KBM-7 (cell line): ENCODE measurements at regions of chr5 and their contacts with region 1.

Region 1: DNA sequence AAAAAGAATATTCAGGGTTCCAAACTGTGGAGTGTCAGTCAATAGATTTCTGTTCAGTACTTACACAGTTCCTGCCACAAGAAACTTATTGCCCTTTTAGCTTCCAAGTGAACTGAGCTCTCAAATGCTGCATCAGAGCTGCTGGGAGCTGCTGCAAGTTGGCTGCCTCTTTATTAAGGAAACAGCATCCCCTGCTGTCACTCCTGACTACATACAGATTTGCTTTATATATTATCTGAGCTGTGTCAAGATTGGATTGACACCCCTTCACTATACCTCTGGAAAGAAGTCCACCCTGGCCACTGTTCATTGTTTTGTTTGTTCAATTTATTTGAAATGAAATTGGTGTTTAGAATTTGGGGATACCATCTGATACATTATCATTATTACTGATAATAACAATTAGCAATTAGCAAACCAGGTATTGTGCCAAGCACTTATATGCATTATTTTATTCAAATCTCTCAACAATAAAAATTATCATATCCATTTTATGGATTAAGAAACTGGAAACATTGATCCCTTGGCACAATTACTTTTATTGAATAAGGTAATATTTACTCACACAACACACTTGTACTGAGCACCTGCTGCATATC is 16.4 kb upstream of the C5orf58 start:
- DNase-seq: peak; percentile 58

Region 2: DNA sequence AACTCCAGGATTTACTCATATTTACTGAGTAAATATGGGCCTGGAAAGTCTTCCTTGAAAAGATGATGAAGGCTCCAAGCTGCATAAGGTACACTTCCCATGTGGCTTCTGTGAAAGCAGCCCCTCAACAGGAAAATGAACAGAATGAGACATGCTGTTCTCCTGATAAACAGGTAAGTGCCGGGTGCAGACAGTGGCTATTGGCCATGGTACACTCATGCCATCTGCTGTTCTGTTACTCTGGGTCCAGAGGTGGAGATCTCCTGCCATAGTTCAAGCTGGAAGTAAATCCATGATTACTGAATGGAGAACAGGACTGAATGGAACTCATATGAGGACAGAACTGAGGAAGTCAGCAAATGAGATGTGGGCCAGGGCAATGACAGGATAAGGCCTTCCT is 1019.0 kb before region 1 on chr5:
- in situ Hi-C with region 1: no loop called
- DNase-seq: no peak

Region 3: DNA sequence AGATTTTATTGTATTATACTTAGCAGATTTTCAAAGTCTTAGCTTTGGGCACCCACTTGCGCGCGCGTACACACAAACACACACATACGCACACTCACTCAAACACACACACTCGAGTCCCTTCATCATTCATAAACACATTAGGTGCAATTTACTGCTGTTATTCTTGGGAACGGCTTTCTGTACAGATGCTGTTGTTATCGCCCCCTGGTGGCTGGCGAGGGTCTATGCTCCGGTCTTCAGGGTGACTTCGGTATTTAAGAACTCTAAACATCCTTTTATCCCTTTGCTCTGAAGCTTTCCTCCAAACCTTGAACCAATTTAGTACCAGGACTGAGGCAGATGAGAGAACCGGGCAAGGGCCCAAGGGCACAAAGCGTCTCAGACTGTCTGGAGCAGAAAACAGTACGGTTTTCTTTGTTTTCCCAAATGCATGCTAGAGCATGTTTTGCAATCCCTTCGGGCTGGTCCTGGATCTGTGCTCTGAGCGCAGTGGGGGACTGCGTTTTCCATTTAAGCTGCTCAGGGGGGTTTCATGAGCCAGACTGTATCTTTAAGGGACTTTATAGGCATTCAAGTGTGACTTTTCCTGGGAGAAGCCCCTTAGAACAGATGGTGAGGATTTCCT is 913.8 kb before region 1 on chr5:
- in situ Hi-C with region 1: no loop called
- DNase-seq: peak; percentile 60

Region 4: DNA sequence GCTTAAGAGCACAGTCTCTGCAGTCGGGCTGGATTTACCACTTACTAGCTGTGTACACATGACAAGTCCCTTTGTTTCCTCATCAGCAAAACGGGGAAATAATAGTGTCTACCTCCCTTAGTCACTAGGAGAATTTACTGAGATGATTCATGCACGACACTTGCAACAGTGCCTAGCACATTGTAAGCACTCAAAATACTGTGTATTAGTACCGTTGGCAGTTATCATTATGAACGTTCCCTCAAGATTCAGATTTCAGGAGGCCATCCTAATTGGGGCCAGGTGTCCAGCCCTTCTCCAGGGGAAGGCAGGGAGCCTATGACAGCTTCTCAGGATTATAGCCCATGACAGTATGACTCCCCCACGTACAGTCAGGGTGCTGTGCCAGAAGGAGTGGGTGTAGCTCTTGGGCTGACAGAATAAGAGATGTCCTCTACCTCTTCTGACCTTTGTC is 415.0 kb before region 1 on chr5:
- in situ Hi-C with region 1: no loop called
- DNase-seq: no peak

Region 5: DNA sequence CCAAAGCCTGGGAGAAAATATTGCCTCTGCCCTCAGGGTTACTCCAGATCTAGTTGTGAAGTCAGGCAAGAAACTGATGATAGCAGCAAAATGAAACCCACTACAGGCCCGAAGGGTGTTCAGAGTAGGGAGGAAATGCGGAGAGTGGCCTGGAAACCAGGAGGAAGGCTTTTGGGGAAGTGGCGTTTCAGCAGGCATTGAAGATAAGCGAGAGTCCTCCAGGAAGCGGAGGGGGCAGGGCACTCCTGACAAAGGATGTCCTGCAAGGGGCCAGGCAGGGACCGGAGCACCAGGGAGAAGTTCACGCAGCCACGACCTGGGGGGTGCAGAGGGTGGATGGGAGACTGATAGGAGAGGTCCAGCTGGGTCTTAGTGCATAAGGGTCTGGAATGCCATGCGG is 118.4 kb before region 1 on chr5:
- in situ Hi-C with region 1: loop called (anchors 10 kb)
- DNase-seq: peak; percentile 71

Region 6: DNA sequence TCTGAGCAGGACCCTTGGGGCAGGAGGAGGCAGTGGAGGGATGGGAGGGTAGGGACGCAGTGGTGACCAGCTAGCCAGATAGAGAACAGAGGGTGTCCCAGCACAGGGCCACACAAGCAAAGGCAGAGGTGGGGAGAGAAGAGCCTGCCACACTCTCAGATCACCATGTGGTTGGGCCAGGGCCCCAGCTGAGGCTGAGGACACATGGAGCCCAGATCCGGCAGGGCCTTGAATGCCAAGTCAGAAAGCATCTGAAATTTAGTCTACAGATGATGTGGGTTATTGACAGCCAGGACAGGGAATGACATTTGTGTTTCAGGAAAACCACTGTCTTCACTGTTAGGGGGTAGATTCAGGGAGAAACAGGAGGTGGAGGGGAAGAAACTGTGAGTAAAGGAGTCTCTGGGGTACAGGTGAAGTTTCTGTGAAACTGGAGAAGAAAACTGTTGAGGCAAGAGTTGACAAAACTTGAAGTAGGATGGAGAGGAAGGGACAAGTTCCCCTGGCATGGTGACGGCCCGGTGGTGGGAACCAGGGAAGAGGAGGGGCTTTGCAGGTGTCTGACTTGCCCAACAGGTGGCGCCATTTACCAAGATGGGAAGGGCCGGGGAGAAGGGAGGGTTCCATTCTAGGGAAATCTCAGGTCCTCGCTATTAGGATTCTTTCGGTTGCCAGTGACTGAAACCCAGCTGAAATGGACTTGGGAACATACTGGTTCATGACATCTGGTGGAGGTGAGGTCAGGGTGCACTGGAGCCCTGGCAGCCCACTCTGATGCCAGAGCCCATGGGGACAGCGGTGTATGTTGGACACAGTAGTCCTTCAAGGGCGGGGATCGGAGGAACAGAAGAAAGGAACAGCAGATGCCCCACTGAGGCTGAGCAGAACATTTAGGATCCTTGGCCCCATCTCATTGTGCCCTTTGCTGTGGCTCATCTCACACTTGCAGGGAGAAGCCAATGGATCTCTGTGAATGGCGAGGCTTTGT is 387.5 kb after region 1 on chr5:
- in situ Hi-C with region 1: loop called (anchors 25 kb)
- DNase-seq: peak; percentile 62